CD8-positive, alpha-beta T cell (primary cell): ENCODE measurements at regions of chr20 and their contacts with region 1.

Region 1: GRCh38 chr20:53594068-53595017 is 704 bp upstream of the ZNF217 start:
- DNase-seq: peak; percentile 94 to 100 (median 98)
- ATAC-seq: peak; percentile 74
- H3K4me3 ChIP-seq: peak overlapping the region; percentile 67 to 83
- H3K4me3 Mint-ChIP-seq: peak overlapping the region; percentile 82
- H3K27ac ChIP-seq: peak overlapping the region; percentile 84 to 87
- H3K27ac Mint-ChIP-seq: peak overlapping the region; percentile 92
- H3K4me1 ChIP-seq: peaks cover 42% of the 10 kb centered on the region
- H3K4me1 Mint-ChIP-seq: peaks cover 59% of the 10 kb centered on the region
- H3K27me3 ChIP-seq: no peaks in the 10 kb centered on the region
- H3K27me3 Mint-ChIP-seq: no peaks in the 10 kb centered on the region
- CTCF ChIP-seq: no peak

Region 2: DNA sequence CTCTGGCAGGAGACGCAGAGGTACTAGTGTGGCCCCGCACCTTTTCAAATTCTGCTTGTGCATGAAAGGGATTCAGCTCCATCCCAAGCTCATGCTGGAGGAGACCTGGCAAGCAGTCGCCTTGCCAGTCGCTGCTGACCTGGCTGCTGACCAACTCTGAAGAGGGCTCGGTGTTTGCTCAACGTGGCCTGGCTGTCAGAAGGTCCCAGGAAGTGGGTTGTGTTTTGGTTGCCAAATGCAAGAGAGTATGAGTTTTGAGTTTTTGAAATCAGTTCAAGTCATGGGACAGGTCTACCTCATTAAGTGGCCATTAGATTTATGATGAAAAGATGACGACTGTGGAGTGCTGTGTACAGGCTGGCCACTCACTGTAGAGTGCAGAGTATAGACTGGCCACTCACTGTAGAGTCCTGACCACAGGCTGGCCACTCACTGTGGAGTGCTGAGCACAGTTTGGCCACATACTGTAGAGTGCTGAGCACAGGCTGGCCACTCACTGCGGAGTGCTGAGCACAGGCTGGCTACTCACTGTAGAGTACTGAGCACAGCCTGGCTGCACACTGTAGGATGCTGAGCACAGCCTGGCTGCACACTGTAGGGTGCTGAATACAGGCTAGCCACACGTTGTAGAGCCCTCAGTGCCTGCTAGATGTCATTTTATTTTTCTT is 194.6 kb before region 1 on chr20:
- CTCF ChIA-PET with region 1: no interaction called
- POLR2A ChIA-PET with region 1: no interaction called
- intact Hi-C with region 1: no loop called
- DNase-seq: no peak
- ATAC-seq: no peak
- H3K4me3 ChIP-seq: no peak overlapping the region
- H3K4me3 Mint-ChIP-seq: no peak overlapping the region
- H3K27ac ChIP-seq: no peak overlapping the region
- H3K27ac Mint-ChIP-seq: no peak overlapping the region
- H3K4me1 ChIP-seq: peaks cover 30% of the 10 kb centered on the region
- H3K4me1 Mint-ChIP-seq: peaks cover 45% of the 10 kb centered on the region
- H3K27me3 ChIP-seq: peaks cover 0 to 3% of the 10 kb centered on the region in 2 experiments
- H3K27me3 Mint-ChIP-seq: peaks cover 2% of the 10 kb centered on the region
- CTCF ChIP-seq: no peak

Region 3: GRCh38 chr20:53643031-53643832 is 48.9 kb after region 1 on chr20:
- CTCF ChIA-PET with region 1: interaction called, 4 read pairs
- POLR2A ChIA-PET with region 1: interaction called, 17 read pairs
- intact Hi-C with region 1: loop called in 1 of 2 experiments (anchors 2 kb)
- DNase-seq: peak; percentile 39 to 88 (median 71)
- ATAC-seq: peak; percentile 93
- H3K4me3 ChIP-seq: peak overlapping the region; percentile 19 to 47
- H3K4me3 Mint-ChIP-seq: peak overlapping the region; percentile 68
- H3K27ac ChIP-seq: peak overlapping the region; percentile 67 to 80
- H3K27ac Mint-ChIP-seq: peak overlapping the region; percentile 92
- H3K4me1 ChIP-seq: peaks cover 37% of the 10 kb centered on the region
- H3K4me1 Mint-ChIP-seq: peaks cover 55% of the 10 kb centered on the region
- H3K27me3 ChIP-seq: no peaks in the 10 kb centered on the region
- H3K27me3 Mint-ChIP-seq: no peaks in the 10 kb centered on the region
- CTCF ChIP-seq: no peak

Region 4: GRCh38 chr20:53652090-53652858 is 57.9 kb after region 1 on chr20:
- CTCF ChIA-PET with region 1: no interaction called
- POLR2A ChIA-PET with region 1: interaction called, 4 read pairs
- intact Hi-C with region 1: loop called in 1 of 2 experiments (anchors 2 kb)
- DNase-seq: peak in 2 of 9 experiments; percentile 57 to 77
- ATAC-seq: peak; percentile 72
- H3K4me3 ChIP-seq: peak overlapping the region in 1 of 2 experiments; percentile 28
- H3K4me3 Mint-ChIP-seq: peak overlapping the region; percentile 66
- H3K27ac ChIP-seq: peak overlapping the region; percentile 56 to 71
- H3K27ac Mint-ChIP-seq: peak overlapping the region; percentile 93
- H3K4me1 ChIP-seq: peaks cover 40% of the 10 kb centered on the region
- H3K4me1 Mint-ChIP-seq: peaks cover 45% of the 10 kb centered on the region
- H3K27me3 ChIP-seq: no peaks in the 10 kb centered on the region
- H3K27me3 Mint-ChIP-seq: no peaks in the 10 kb centered on the region
- CTCF ChIP-seq: no peak

Region 5: DNA sequence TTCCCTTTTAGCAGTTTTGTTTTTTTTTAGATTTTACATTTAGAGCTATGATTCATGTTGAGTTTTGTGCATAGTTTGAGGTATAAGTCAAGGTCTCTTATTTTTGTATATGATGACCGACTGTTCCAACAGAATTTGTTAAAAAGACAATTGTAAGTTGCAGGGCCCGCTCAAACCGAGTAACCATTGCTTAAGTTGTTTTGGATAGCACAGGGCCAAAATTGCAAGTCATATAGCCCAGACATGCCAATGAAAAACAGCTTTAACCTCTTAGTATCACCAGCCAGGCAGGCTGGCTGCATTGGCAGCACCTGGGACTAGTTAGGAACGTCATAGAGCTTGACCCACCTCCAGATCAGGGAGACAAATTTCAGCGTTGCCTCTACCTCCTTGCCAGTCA is 660.8 kb after region 1 on chr20:
- CTCF ChIA-PET with region 1: no interaction called
- POLR2A ChIA-PET with region 1: no interaction called
- intact Hi-C with region 1: no loop called
- DNase-seq: no peak
- ATAC-seq: no peak
- H3K4me3 ChIP-seq: no peak overlapping the region
- H3K4me3 Mint-ChIP-seq: no peak overlapping the region
- H3K27ac ChIP-seq: no peak overlapping the region
- H3K27ac Mint-ChIP-seq: no peak overlapping the region
- H3K4me1 ChIP-seq: no peaks in the 10 kb centered on the region
- H3K4me1 Mint-ChIP-seq: no peaks in the 10 kb centered on the region
- H3K27me3 ChIP-seq: no peaks in the 10 kb centered on the region
- H3K27me3 Mint-ChIP-seq: no peaks in the 10 kb centered on the region
- CTCF ChIP-seq: no peak